Activated naive CD4-positive, alpha-beta T cell treated with anti-CD3 and anti-CD28 coated beads for 36 hours (primary cell): ENCODE measurements at regions of chr9 and their contacts with region 1.

Region 1: GRCh38 chr9:22037954-22038690 is 29.0 kb upstream of the CDKN2B start:
- DNase-seq: no peak
- H3K4me3 Mint-ChIP-seq: no peak overlapping the region
- H3K27ac Mint-ChIP-seq: no peak overlapping the region
- H3K4me1 Mint-ChIP-seq: peaks cover 9% of the 10 kb centered on the region
- H3K27me3 Mint-ChIP-seq: peaks cover 16% of the 10 kb centered on the region

Region 2: GRCh38 chr9:21465859-21466518 is 572.1 kb before region 1 on chr9:
- CTCF ChIA-PET with region 1: no interaction called
- intact Hi-C with region 1: loop called (anchors 10 kb)
- DNase-seq: no peak
- H3K4me3 Mint-ChIP-seq: no peak overlapping the region
- H3K27ac Mint-ChIP-seq: no peak overlapping the region
- H3K4me1 Mint-ChIP-seq: peaks cover 2% of the 10 kb centered on the region
- H3K27me3 Mint-ChIP-seq: no peaks in the 10 kb centered on the region

Region 3: DNA sequence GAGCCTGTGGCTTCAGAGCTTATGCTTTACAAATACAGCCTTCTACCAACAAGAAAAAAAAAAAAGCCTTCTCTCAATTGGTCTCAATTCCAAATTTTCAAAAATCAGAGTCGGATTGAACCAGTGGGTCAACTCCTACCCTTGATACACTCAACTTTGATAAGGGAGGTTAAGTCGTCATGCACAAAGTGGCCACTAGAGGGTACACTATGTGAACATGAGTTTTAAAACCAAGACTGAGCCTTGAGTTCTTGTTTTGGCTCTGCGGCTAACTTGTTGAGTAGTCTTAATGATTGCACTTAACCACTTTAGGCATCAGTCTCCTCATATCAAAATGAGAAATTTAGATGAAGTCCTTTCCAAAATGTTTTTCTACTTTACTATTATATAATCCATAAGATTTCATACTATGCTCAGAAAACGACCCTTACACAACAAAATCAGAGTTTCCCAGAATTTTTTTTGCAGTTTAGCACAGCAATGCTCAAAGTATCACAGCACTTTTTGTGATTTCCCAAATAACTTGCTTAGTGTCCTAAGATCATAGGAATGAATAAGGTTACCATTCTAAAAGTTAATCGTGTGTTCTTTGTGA is 328.6 kb before region 1 on chr9:
- CTCF ChIA-PET with region 1: interaction called, 3 read pairs
- intact Hi-C with region 1: loop called (anchors 5 kb)
- DNase-seq: peak; percentile 86
- H3K4me3 Mint-ChIP-seq: no peak overlapping the region
- H3K27ac Mint-ChIP-seq: no peak overlapping the region
- H3K4me1 Mint-ChIP-seq: peaks cover 14% of the 10 kb centered on the region
- H3K27me3 Mint-ChIP-seq: no peaks in the 10 kb centered on the region

Region 4: GRCh38 chr9:22052376-22052945 is 14.3 kb after region 1 on chr9:
- CTCF ChIA-PET with region 1: interaction called, 11 read pairs
- intact Hi-C with region 1: no loop called
- DNase-seq: peak; percentile 67
- H3K4me3 Mint-ChIP-seq: no peak overlapping the region
- H3K27ac Mint-ChIP-seq: no peak overlapping the region
- H3K4me1 Mint-ChIP-seq: peaks cover 29% of the 10 kb centered on the region
- H3K27me3 Mint-ChIP-seq: peaks cover 20% of the 10 kb centered on the region

Region 5: GRCh38 chr9:22119537-22120158 is 81.5 kb after region 1 on chr9:
- CTCF ChIA-PET with region 1: interaction called, 7 read pairs
- intact Hi-C with region 1: loop called (anchors 2 kb)
- DNase-seq: peak; percentile 32
- H3K4me3 Mint-ChIP-seq: no peak overlapping the region
- H3K27ac Mint-ChIP-seq: no peak overlapping the region
- H3K4me1 Mint-ChIP-seq: no peaks in the 10 kb centered on the region
- H3K27me3 Mint-ChIP-seq: peaks cover 9% of the 10 kb centered on the region

Region 6: GRCh38 chr9:22452415-22453010 is 414.4 kb after region 1 on chr9:
- CTCF ChIA-PET with region 1: no interaction called
- intact Hi-C with region 1: loop called (anchors 5 kb)
- DNase-seq: peak; percentile 68
- H3K4me3 Mint-ChIP-seq: no peak overlapping the region
- H3K27ac Mint-ChIP-seq: no peak overlapping the region
- H3K4me1 Mint-ChIP-seq: peaks cover 2% of the 10 kb centered on the region
- H3K27me3 Mint-ChIP-seq: peaks cover 37% of the 10 kb centered on the region